ENCODE measurements at regions of chr18 and their contacts with region 1.

Region 1: GRCh38 chr18:48728204-48728833 is 189.5 kb downstream of the CTIF start:
- DNase-seq: no peak
- ATAC-seq: no peak
- H3K4me3 ChIP-seq: no peak overlapping the region
- H3K27ac ChIP-seq: no peak overlapping the region
- H3K4me1 ChIP-seq: peaks cover 31% of the 10 kb centered on the region
- H3K27me3 ChIP-seq: no peaks in the 10 kb centered on the region
- CTCF ChIP-seq: no peak
- EP300 ChIP-seq: no peak
- POLR2A ChIP-seq: no peak
- RAD21 ChIP-seq: no peak

Region 2: DNA sequence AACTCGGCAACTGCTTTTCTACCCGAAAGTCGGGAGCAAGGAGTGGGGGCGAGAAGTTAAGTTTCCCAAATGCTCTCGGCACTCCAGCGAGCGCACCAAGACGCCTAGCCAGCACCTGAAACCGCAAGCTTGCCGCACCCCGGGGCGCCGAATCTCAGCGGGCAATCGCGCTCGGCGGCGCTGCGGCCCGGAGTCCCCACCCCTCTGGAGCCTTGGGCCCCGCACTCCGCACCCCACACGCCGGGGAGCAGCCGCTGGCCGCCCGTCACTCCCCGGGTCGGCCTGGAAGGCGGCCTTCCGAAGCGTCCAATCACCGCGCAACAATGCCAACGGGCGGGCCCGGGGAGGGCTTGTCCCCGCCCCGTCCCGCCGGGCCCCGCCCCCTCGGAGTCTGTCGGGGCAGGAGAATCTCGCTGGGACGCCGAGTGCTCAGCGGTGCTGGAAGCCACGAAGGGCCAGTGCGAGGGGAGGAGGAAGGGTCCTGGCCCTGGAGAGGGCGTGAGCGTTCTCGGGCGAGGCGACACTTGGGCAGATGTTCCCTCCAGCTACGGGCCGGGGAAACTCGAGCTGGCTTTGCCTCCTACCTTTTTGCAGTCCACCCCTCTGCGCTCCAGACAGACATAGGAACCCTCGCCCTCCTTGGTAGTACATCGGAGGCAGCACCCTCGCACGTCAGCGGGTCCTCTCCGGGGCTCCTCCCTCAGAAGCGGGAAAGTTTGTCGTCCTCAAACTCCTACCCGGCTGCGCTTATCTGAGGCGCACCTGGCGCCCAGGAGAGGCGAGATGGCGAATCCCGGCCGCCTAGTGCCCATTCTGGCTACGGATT is 318.0 kb before region 1 on chr18:
- CTCF ChIA-PET with region 1: no interaction called
- POLR2A ChIA-PET with region 1: no interaction called
- RAD21 ChIA-PET with region 1: no interaction called
- SMC1A ChIA-PET with region 1: no interaction called
- in situ Hi-C with region 1: no loop called
- intact Hi-C with region 1: no loop called
- DNase-seq: no peak
- ATAC-seq: peak; percentile 99
- H3K4me3 ChIP-seq: peak overlapping the region; percentile 69
- H3K27ac ChIP-seq: no peak overlapping the region
- H3K4me1 ChIP-seq: no peaks in the 10 kb centered on the region
- H3K27me3 ChIP-seq: peaks cover 11 to 16% of the 10 kb centered on the region in 2 experiments
- CTCF ChIP-seq: no peak
- EP300 ChIP-seq: no peak
- POLR2A ChIP-seq: no peak
- RAD21 ChIP-seq: no peak

Region 3: GRCh38 chr18:48750485-48751175 is 22.3 kb after region 1 on chr18:
- CTCF ChIA-PET with region 1: interaction called, 4 read pairs
- POLR2A ChIA-PET with region 1: interaction called, 4 read pairs
- RAD21 ChIA-PET with region 1: interaction called, 5 read pairs
- SMC1A ChIA-PET with region 1: interaction called, 4 read pairs
- in situ Hi-C with region 1: no loop called
- intact Hi-C with region 1: loop called (anchors 2 kb)
- DNase-seq: no peak
- ATAC-seq: no peak
- H3K4me3 ChIP-seq: no peak overlapping the region
- H3K27ac ChIP-seq: no peak overlapping the region
- H3K4me1 ChIP-seq: peaks cover 28% of the 10 kb centered on the region
- H3K27me3 ChIP-seq: no peaks in the 10 kb centered on the region
- CTCF ChIP-seq: no peak
- EP300 ChIP-seq: no peak
- POLR2A ChIP-seq: no peak
- RAD21 ChIP-seq: no peak

Region 4: GRCh38 chr18:49189772-49190171 is 461.5 kb after region 1 on chr18:
- CTCF ChIA-PET with region 1: no interaction called
- POLR2A ChIA-PET with region 1: no interaction called
- RAD21 ChIA-PET with region 1: no interaction called
- SMC1A ChIA-PET with region 1: no interaction called
- in situ Hi-C with region 1: no loop called
- intact Hi-C with region 1: no loop called
- DNase-seq: no peak
- ATAC-seq: no peak
- H3K4me3 ChIP-seq: no peak overlapping the region
- H3K27ac ChIP-seq: no peak overlapping the region
- H3K4me1 ChIP-seq: no peaks in the 10 kb centered on the region
- H3K27me3 ChIP-seq: no peaks in the 10 kb centered on the region
- CTCF ChIP-seq: no peak
- EP300 ChIP-seq: no peak
- POLR2A ChIP-seq: no peak
- RAD21 ChIP-seq: no peak